CD8-positive, alpha-beta T cell (primary cell): ENCODE measurements at regions of chr1 and their contacts with region 1.

Region 1: DNA sequence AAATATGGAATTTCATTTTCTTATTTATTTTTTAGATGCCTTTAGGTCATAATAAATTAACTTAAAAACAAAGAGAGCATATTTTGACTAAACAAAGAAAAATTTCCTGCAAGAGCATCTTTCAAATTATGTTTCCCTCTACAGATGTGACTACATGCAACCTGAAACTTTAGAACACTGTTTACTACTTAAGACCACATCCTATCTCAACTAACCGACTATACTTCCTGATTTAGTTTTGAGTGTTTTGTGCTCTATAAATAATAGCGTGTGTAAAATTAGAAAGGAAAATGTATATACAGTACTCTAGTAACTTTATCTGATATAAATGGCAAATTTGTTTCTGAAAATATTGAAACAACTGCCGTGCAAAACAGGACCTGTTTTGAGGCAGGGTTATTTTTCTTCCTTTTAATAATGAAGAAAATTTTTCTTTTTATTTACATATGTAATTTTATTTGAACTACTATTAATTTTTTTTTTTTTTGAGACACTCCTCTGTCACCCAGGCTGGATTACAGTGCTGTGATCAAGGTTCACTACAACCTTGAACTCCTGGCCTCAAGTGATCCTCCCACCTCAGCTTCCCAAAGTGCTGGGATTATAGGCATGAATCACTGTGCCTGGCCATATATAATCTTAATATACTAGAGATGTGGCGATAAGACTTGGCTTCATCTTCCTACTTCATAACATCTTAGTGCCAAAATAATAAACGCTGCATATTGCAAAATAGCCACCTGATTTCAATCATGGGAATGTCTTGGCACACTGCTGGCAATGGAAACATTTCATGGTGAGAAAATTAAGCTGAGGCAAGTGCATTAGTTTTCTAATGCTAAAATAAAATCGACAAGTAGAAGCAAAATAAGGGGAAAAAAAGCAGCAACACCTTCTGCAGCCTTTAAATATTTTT is 12.3 kb downstream of the ZRANB2 start:
- DNase-seq: no peak
- ATAC-seq: no peak
- H3K4me3 ChIP-seq: no peak overlapping the region
- H3K4me3 Mint-ChIP-seq: no peak overlapping the region
- H3K27ac ChIP-seq: no peak overlapping the region
- H3K27ac Mint-ChIP-seq: no peak overlapping the region
- H3K4me1 ChIP-seq: no peaks in the 10 kb centered on the region
- H3K4me1 Mint-ChIP-seq: peaks cover 18% of the 10 kb centered on the region
- H3K27me3 ChIP-seq: no peaks in the 10 kb centered on the region
- H3K27me3 Mint-ChIP-seq: no peaks in the 10 kb centered on the region
- CTCF ChIP-seq: no peak

Region 2: GRCh38 chr1:70234733-70235132 is 833.9 kb before region 1 on chr1:
- CTCF ChIA-PET with region 1: no interaction called
- POLR2A ChIA-PET with region 1: no interaction called
- intact Hi-C with region 1: loop called in 1 of 2 experiments (anchors 5 kb)
- DNase-seq: no peak
- ATAC-seq: no peak
- H3K4me3 ChIP-seq: no peak overlapping the region
- H3K4me3 Mint-ChIP-seq: no peak overlapping the region
- H3K27ac ChIP-seq: no peak overlapping the region
- H3K27ac Mint-ChIP-seq: no peak overlapping the region
- H3K4me1 ChIP-seq: no peaks in the 10 kb centered on the region
- H3K4me1 Mint-ChIP-seq: peaks cover 21% of the 10 kb centered on the region
- H3K27me3 ChIP-seq: no peaks in the 10 kb centered on the region
- H3K27me3 Mint-ChIP-seq: no peaks in the 10 kb centered on the region
- CTCF ChIP-seq: no peak

Region 3: GRCh38 chr1:70247768-70248167 is 820.8 kb before region 1 on chr1:
- CTCF ChIA-PET with region 1: no interaction called
- POLR2A ChIA-PET with region 1: no interaction called
- intact Hi-C with region 1: loop called in 1 of 2 experiments (anchors 5 kb)
- DNase-seq: no peak
- ATAC-seq: no peak
- H3K4me3 ChIP-seq: no peak overlapping the region
- H3K4me3 Mint-ChIP-seq: no peak overlapping the region
- H3K27ac ChIP-seq: no peak overlapping the region
- H3K27ac Mint-ChIP-seq: no peak overlapping the region
- H3K4me1 ChIP-seq: no peaks in the 10 kb centered on the region
- H3K4me1 Mint-ChIP-seq: peaks cover 4% of the 10 kb centered on the region
- H3K27me3 ChIP-seq: no peaks in the 10 kb centered on the region
- H3K27me3 Mint-ChIP-seq: no peaks in the 10 kb centered on the region
- CTCF ChIP-seq: no peak

Region 4: DNA sequence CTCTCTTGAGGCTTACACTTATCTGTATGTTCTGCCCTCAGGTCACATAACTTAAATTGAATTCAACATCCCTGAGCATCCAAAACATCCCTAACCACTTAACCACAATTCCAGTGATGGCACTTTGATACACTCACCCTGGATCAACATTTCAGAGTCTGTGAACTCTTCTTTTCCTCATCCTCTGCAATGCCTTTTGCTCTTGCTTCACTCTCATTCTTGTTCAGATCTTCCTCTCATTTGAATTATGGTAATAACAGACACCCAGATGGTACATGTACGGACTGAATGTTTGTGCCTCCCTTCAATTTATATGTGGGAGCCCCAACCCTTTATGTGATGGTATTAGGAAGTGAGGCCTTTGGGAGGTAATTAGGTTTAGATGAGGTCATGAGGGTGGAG is 54.4 kb before region 1 on chr1:
- CTCF ChIA-PET with region 1: no interaction called
- POLR2A ChIA-PET with region 1: no interaction called
- intact Hi-C with region 1: no loop called
- DNase-seq: no peak
- ATAC-seq: no peak
- H3K4me3 ChIP-seq: no peak overlapping the region
- H3K4me3 Mint-ChIP-seq: no peak overlapping the region
- H3K27ac ChIP-seq: no peak overlapping the region
- H3K27ac Mint-ChIP-seq: no peak overlapping the region
- H3K4me1 ChIP-seq: no peaks in the 10 kb centered on the region
- H3K4me1 Mint-ChIP-seq: no peaks in the 10 kb centered on the region
- H3K27me3 ChIP-seq: no peaks in the 10 kb centered on the region
- H3K27me3 Mint-ChIP-seq: peaks cover 4% of the 10 kb centered on the region
- CTCF ChIP-seq: no peak

Region 5: GRCh38 chr1:71298633-71299032 is 230.1 kb after region 1 on chr1:
- CTCF ChIA-PET with region 1: no interaction called
- POLR2A ChIA-PET with region 1: no interaction called
- intact Hi-C with region 1: no loop called
- DNase-seq: no peak
- ATAC-seq: no peak
- H3K4me3 ChIP-seq: no peak overlapping the region
- H3K4me3 Mint-ChIP-seq: no peak overlapping the region
- H3K27ac ChIP-seq: no peak overlapping the region
- H3K27ac Mint-ChIP-seq: no peak overlapping the region
- H3K4me1 ChIP-seq: no peaks in the 10 kb centered on the region
- H3K4me1 Mint-ChIP-seq: no peaks in the 10 kb centered on the region
- H3K27me3 ChIP-seq: no peaks in the 10 kb centered on the region
- H3K27me3 Mint-ChIP-seq: no peaks in the 10 kb centered on the region
- CTCF ChIP-seq: no peak